Naive thymus-derived CD8-positive, alpha-beta T cell (primary cell): ENCODE measurements at regions of chr3 and their contacts with region 1.

Region 1: GRCh38 chr3:23916886-23917678 is at the starts of genes NKIRAS1 and RPL15:
- DNase-seq: peak; percentile 92 to 99 (median 97)
- ATAC-seq: peak; percentile 89 to 91
- H3K4me3 Mint-ChIP-seq: peak within 1 kb of the TSS; percentile 95 to 99 (median 98)
- H3K27ac Mint-ChIP-seq: peak within 1 kb of the TSS; percentile 96 to 99 (median 98)
- H3K4me1 Mint-ChIP-seq: peaks cover 30 to 61% (median 50%) of the 10 kb centered on the region in 4 donors
- H3K27me3 Mint-ChIP-seq: no peaks in the 10 kb centered on the region
- polyA plus RNA-seq, gene NKIRAS1: 2.8 to 4.6 (median 4.1) TPM
- polyA plus RNA-seq, gene RPL15: 5,952 to 6,458 (median 6,299) TPM

Region 2: GRCh38 chr3:23668430-23668904 is 248.6 kb before region 1 on chr3:
- POLR2A ChIA-PET with region 1: no interaction called
- DNase-seq: no peak
- ATAC-seq: no peak
- H3K4me3 Mint-ChIP-seq: no peak overlapping the region
- H3K27ac Mint-ChIP-seq: no peak overlapping the region
- H3K4me1 Mint-ChIP-seq: peaks cover 0 to 4% (median 0%) of the 10 kb centered on the region in 4 donors
- H3K27me3 Mint-ChIP-seq: peaks cover 15 to 35% (median 21%) of the 10 kb centered on the region in 5 donors

Region 3: GRCh38 chr3:23805633-23806533 is 111.2 kb before region 1 on chr3 and contains the start of gene UBE2E1:
- POLR2A ChIA-PET with region 1: interaction called, 15 read pairs
- DNase-seq: peak; percentile 56 to 87 (median 71)
- ATAC-seq: peak; percentile 80 to 88
- H3K4me3 Mint-ChIP-seq: peak within 1 kb of the TSS; percentile 89 to 100 (median 96)
- H3K27ac Mint-ChIP-seq: peak within 1 kb of the TSS; percentile 91 to 99 (median 95)
- H3K4me1 Mint-ChIP-seq: peaks cover 25 to 49% (median 40%) of the 10 kb centered on the region in 4 donors
- H3K27me3 Mint-ChIP-seq: no peaks in the 10 kb centered on the region
- polyA plus RNA-seq, gene UBE2E1: 5.6 to 14.7 (median 9.8) TPM

Region 4: GRCh38 chr3:23865595-23866450 is 51.3 kb before region 1 on chr3:
- POLR2A ChIA-PET with region 1: no interaction called
- DNase-seq: no peak
- ATAC-seq: no peak
- H3K4me3 Mint-ChIP-seq: no peak overlapping the region
- H3K27ac Mint-ChIP-seq: peak overlapping the region in 7 of 10 donors; percentile 1 to 75 (median 31)
- H3K4me1 Mint-ChIP-seq: peaks cover 26 to 55% (median 48%) of the 10 kb centered on the region in 4 donors
- H3K27me3 Mint-ChIP-seq: no peaks in the 10 kb centered on the region

Region 5: GRCh38 chr3:23945903-23946751 is 29.0 kb after region 1 on chr3:
- POLR2A ChIA-PET with region 1: interaction called, 105 read pairs
- DNase-seq: peak; percentile 94 to 99 (median 97)
- ATAC-seq: peak; percentile 72 to 79
- H3K4me3 Mint-ChIP-seq: peak overlapping the region; percentile 64 to 97 (median 88)
- H3K27ac Mint-ChIP-seq: peak overlapping the region; percentile 82 to 96 (median 92)
- H3K4me1 Mint-ChIP-seq: peaks cover 27 to 56% (median 46%) of the 10 kb centered on the region in 4 donors
- H3K27me3 Mint-ChIP-seq: no peaks in the 10 kb centered on the region

Region 6: DNA sequence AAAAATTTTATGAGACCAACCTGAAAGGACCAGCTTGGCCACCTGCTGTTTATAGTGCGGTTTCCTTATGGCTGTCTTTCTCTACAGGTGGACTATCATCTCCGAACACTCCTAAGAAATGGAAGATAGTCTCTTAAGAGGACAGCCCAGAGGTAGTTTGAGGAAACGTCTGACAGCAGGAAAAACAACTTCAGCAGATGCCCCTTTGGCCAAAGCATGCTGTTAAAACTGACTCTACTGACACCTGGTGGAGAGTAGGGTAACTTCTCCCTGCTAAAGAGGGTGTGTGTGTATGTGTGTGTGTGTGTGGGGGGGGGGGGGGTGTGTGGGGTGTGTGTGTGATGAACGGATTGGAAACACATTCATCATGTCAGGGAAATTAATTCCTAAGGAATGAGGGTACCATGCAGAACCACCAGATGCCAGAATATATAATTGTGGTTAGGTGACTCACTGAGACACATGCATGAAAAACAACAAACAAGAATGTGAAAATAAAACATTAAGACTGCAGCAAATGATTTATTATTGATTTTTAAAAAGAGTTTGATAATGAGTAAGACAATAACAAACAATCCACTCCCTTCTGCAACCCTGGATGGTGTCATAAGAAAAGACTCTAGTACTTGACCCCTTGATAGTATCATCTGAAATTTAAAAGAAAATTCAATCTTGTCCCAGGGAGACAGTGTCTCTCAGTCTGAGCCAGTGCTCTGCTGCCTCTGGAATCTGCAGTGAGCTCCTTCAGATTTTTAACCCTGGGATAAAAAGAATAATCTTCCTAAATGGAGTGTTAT is 321.1 kb after region 1 on chr3:
- POLR2A ChIA-PET with region 1: no interaction called
- DNase-seq: peak in 8 of 10 donors; percentile 0 to 49 (median 20)
- ATAC-seq: peak in 1 of 2 donors; percentile 51
- H3K4me3 Mint-ChIP-seq: no peak overlapping the region
- H3K27ac Mint-ChIP-seq: no peak overlapping the region
- H3K4me1 Mint-ChIP-seq: no peaks in the 10 kb centered on the region
- H3K27me3 Mint-ChIP-seq: peaks cover 0 to 12% (median 2%) of the 10 kb centered on the region in 5 donors